Heart right ventricle (tissue), 16 donors: ENCODE measurements at regions of chr7 and their contacts with region 1.

Region 1: GRCh38 chr7:91034459-91035368 is 229.5 kb upstream of the FZD1 start:
- DNase-seq: peak in 1 of 2 donors; percentile 65
- ATAC-seq: peak; percentile 34 to 82 (median 70)
- H3K4me3 ChIP-seq: no peak overlapping the region
- H3K27ac ChIP-seq: no peak overlapping the region
- H3K4me1 ChIP-seq: peaks cover 0 to 7% (median 0%) of the 10 kb centered on the region in 9 donors
- H3K27me3 ChIP-seq: no peaks in the 10 kb centered on the region
- CTCF ChIP-seq: peak; percentile 38 to 79 (median 69)

Region 2: DNA sequence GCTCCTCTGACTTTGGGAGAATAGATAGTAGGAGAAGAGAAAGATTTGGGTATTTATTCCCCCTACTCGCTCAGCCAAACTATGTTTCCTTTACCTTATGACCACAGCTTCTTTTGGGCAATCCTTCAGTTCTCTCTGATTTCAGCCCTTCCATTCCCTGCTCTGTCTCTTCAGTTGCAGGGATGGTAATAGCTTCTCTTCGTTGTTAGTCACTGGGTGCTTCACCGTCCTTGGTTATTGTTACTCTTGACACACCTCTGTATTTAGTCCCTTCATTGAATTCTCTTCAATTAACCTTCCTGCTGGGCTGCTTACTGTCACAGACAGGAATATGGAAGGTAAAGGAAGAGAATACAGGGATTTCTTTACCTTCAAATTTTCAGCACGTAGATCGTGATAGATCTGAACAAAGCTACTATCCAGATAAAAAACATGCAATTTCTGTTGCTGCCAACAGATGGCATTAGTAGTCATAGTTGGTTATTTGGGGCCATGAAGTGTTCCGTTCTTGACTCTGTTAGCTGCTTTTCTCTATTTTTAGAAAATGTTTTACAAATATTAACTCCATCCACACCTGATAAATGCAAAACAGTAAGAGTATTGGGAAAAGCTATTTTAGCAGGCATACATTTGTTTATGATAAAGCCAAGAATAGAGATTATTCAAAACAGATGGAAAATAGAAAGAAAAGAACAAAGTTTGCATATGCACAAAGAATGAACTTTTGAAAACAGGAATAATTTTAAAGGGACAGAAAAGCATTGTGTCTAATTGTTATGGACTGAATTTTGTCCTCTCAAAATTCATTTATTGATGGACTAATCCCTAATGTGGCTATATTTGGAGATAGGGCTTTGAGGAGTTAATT is 579.3 kb before region 1 on chr7:
- intact Hi-C with region 1: loop called in 8 of 10 experiments (anchors 5 to 10 kb)
- DNase-seq: peak in 1 of 2 donors; percentile 11
- ATAC-seq: peak in 6 of 8 donors; percentile 61 to 71 (median 68)
- H3K4me3 ChIP-seq: peak overlapping the region in 8 of 10 donors; percentile 7 to 31 (median 20)
- H3K27ac ChIP-seq: no peak overlapping the region
- H3K4me1 ChIP-seq: peaks cover 0 to 11% (median 6%) of the 10 kb centered on the region in 9 donors
- H3K27me3 ChIP-seq: no peaks in the 10 kb centered on the region
- CTCF ChIP-seq: peak; percentile 21 to 81 (median 71)

Region 3: GRCh38 chr7:90552521-90552920 is 482.2 kb before region 1 on chr7:
- intact Hi-C with region 1: loop called in 9 of 10 experiments (anchors 2 to 5 kb)
- DNase-seq: no peak
- ATAC-seq: no peak
- H3K4me3 ChIP-seq: no peak overlapping the region
- H3K27ac ChIP-seq: no peak overlapping the region
- H3K4me1 ChIP-seq: no peaks in the 10 kb centered on the region
- H3K27me3 ChIP-seq: no peaks in the 10 kb centered on the region
- CTCF ChIP-seq: peak; percentile 10 to 68 (median 49)

Region 4: GRCh38 chr7:90595801-90596671 is 438.7 kb before region 1 on chr7 and contains the start of gene CDK14:
- intact Hi-C with region 1: loop called in 1 of 10 experiments (anchors 5 kb)
- DNase-seq: peak; percentile 81 to 85
- ATAC-seq: peak; percentile 62 to 84 (median 74)
- H3K4me3 ChIP-seq: peak within 1 kb of the TSS; percentile 63 to 90 (median 78)
- H3K27ac ChIP-seq: peak within 1 kb of the TSS; percentile 80 to 91 (median 84)
- H3K4me1 ChIP-seq: peaks cover 0 to 58% (median 25%) of the 10 kb centered on the region in 9 donors
- H3K27me3 ChIP-seq: peaks cover 0 to 5% (median 0%) of the 10 kb centered on the region in 7 donors
- CTCF ChIP-seq: peak; percentile 26 to 67 (median 50)
- total RNA-seq, gene CDK14: 12.7 to 36.5 (median 25.5) TPM

Region 5: GRCh38 chr7:90843472-90843871 is 191.2 kb before region 1 on chr7:
- intact Hi-C with region 1: loop called in 1 of 10 experiments (anchors 10 kb)
- DNase-seq: no peak
- ATAC-seq: no peak
- H3K4me3 ChIP-seq: no peak overlapping the region
- H3K27ac ChIP-seq: no peak overlapping the region
- H3K4me1 ChIP-seq: peaks cover 0 to 20% (median 4%) of the 10 kb centered on the region in 9 donors
- H3K27me3 ChIP-seq: no peaks in the 10 kb centered on the region
- CTCF ChIP-seq: no peak

Region 6: DNA sequence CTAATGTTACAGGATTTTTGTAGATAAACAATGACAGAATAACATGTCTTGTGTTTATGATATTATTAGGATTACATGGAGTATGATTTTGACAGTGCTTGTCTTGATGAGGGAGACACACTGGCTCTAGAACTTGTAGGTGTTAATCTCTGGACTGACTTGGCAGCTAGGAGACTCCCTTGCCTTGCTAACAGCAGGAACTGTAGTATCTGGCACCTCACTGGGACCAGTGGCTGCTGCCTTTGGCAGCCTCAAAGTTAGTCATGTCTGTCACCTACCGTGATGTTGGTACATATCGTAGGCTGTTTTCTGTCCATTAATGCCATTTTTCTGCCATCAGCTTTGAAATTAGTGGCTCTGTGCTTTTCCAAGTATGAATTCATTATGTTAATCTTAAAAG is 177.1 kb before region 1 on chr7:
- intact Hi-C with region 1: loop called in 1 of 10 experiments (anchors 10 kb)
- DNase-seq: peak in 1 of 2 donors; percentile 21
- ATAC-seq: peak in 7 of 8 donors; percentile 34 to 84 (median 59)
- H3K4me3 ChIP-seq: no peak overlapping the region
- H3K27ac ChIP-seq: no peak overlapping the region
- H3K4me1 ChIP-seq: peaks cover 0 to 6% (median 0%) of the 10 kb centered on the region in 9 donors
- H3K27me3 ChIP-seq: no peaks in the 10 kb centered on the region
- CTCF ChIP-seq: peak in 4 of 9 donors; percentile 16 to 46 (median 38)

Region 7: DNA sequence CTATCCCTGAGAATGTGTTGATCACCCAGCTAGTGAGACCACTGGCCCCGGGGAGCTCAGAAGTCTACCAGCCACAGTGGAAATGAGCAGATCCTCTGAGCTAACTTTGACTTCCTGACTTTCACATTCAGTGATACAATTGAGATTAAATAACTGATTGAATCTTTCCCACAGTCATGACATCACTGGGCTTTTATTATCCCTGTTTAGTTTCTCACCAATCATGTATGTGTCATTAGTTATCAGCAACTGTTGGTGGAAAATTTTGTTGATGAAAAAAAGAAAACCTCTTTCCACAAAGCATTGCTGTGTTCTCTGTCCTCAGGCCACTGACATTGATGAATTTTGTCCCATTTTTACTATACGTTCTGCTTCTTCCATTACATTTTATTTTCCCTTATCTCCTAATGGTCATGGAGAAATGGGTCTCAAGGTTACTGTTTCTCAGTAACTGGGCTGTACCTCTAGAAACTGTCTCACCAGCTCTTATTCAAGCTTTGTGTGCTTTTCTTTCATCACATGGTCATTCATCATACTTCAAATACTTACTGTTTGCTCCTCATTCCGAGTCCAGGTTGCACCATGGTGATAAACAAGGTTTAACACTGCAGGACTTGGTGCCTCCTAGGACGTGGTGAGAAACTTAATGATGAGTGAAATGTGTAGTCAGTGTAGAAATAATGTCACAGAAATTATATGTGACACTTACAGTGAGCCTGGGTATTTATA is 133.9 kb before region 1 on chr7:
- intact Hi-C with region 1: no loop called
- DNase-seq: no peak
- ATAC-seq: no peak
- H3K4me3 ChIP-seq: no peak overlapping the region
- H3K27ac ChIP-seq: no peak overlapping the region
- H3K4me1 ChIP-seq: no peaks in the 10 kb centered on the region
- H3K27me3 ChIP-seq: no peaks in the 10 kb centered on the region
- CTCF ChIP-seq: no peak

Region 8: GRCh38 chr7:91151916-91152315 is 117.2 kb after region 1 on chr7:
- intact Hi-C with region 1: no loop called
- DNase-seq: no peak
- ATAC-seq: no peak
- H3K4me3 ChIP-seq: no peak overlapping the region
- H3K27ac ChIP-seq: no peak overlapping the region
- H3K4me1 ChIP-seq: no peaks in the 10 kb centered on the region
- H3K27me3 ChIP-seq: no peaks in the 10 kb centered on the region
- CTCF ChIP-seq: no peak